AG04449 (cell line): ENCODE measurements at regions of chr7 and their contacts with region 1.

Region 1: DNA sequence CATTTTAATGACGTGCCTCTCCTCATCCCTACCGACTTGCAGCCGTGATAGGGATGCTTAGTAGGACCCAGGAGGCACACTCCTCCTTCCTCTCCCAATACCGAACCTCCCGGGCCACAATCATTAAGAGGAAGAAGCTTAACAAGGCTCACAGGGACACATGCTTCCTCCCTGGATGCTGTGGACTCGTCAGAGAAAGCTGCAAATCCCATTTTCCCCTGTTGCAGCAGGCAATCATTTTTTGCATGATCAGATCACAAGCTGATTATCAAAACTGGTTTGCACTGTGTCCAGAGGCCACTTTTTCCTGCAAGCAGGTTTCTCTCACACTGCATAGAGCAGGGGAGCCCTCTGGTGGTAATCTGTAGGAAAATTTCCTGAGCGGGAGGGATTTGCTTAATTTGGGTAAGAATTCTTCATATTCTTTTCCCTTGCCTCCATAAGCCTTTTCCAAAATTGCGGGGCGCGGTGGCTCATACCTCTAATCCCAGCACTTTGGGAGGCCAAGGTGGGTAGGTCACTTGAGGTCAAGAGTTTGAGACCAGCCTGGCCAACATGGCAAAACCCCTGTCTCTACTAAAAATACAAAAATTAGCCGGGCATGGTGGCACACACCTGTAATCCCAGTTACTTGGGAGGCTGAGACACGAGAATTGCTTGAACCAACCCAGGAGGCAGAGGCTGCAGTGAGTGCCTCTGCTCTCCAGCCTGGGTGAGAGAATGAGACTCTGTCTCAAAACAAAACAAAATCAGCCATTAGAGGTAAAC is 16.1 kb upstream of the LAMB4 start:
- DNase-seq: peak; percentile 42
- H3K4me3 ChIP-seq: peak overlapping the region; percentile 42
- CTCF ChIP-seq: peak; percentile 79

Region 2: GRCh38 chr7:107879400-107880035 is 266.7 kb before region 1 on chr7:
- CTCF ChIA-PET with region 1: interaction called, 60 read pairs
- POLR2A ChIA-PET with region 1: no interaction called
- DNase-seq: no peak
- H3K4me3 ChIP-seq: no peak overlapping the region
- CTCF ChIP-seq: peak; percentile 64

Region 3: DNA sequence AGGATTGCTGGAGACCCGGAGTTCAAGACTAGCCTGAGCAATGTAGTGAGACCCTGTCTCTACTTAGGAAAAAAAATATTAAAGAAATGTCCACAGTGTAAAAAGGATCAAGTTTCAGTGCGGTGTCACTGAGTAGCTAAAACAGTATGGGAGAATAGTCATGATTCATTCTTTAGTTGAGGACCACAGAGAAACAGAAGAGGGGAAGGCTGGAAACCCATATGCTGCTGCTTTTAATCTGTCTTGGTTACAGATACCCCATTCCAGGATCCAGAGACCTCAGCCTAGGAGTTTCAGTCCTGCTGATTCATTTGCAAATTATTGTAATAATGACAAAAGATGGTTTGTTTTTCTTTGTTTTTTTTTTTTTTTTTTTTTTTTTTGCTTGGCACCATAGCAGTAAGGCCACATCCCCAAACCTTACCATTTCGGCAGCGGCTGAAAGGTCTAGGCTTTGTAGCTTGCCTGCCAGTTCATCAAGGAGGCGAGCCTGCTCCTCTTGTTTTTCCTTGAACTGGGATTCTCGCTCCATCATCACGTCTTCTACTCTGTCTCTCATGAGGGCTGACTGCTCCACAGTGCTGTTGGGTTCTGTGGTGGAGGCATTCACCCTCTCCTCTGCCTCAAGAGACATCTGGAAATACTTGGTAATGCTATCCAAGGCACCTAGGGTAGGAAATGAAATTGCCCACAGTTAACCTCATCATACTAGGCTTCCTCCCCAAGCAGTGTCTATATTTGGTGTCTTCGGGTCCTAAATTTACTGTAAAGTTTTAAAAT is 211.1 kb before region 1 on chr7:
- CTCF ChIA-PET with region 1: interaction called, 22 read pairs
- POLR2A ChIA-PET with region 1: no interaction called
- DNase-seq: no peak
- H3K4me3 ChIP-seq: no peak overlapping the region
- CTCF ChIP-seq: no peak

Region 4: GRCh38 chr7:107972075-107972482 is 174.2 kb before region 1 on chr7:
- CTCF ChIA-PET with region 1: interaction called, 12 read pairs
- POLR2A ChIA-PET with region 1: no interaction called
- DNase-seq: peak; percentile 12
- H3K4me3 ChIP-seq: no peak overlapping the region
- CTCF ChIP-seq: no peak

Region 5: GRCh38 chr7:108016841-108017775 is 129.1 kb before region 1 on chr7:
- CTCF ChIA-PET with region 1: interaction called, 29 read pairs
- POLR2A ChIA-PET with region 1: no interaction called
- DNase-seq: no peak
- H3K4me3 ChIP-seq: no peak overlapping the region
- CTCF ChIP-seq: peak; percentile 40

Region 6: DNA sequence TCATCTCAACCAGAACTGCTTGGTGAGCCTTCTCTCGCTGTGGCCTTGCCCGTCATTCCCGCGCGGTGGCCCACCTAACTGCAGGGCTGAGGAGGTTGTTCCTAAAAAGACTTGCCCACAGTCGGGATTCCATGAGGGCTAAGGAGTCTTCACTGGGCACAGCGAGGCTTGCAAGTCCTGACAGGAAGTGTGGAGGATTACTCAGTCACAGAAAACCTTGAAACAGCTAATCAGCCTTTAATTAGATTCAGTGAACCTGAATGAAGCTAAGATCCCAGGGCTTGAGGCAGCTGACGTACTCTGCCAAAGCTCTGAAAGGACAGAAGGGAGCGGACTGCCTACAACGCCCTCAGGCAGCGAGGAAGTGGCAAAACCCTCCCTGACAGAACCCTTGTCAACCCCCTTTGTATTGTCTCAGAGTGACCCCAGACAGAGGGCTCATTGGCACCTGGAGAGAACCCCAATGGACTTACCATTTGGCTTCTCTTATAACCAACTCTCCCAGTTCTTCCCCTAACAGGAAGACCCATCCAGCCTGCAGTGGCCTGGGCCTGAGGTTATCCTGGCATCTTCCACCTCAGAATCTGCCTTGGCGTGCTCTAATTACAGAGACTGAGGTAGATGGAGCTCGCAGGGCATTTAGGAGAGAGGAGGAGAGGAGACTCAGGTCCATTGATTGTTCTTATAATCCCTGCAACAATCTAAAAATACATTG is 13.5 kb before region 1 on chr7:
- CTCF ChIA-PET with region 1: interaction called, 20 read pairs
- POLR2A ChIA-PET with region 1: no interaction called
- DNase-seq: no peak
- H3K4me3 ChIP-seq: no peak overlapping the region
- CTCF ChIP-seq: no peak